Left cardiac atrium (tissue), 4 donors: ENCODE measurements at regions of chr10 and their contacts with region 1.

Region 1: GRCh38 chr10:69696073-69696731 is 66.2 kb downstream of the FAM241B start:
- DNase-seq: peak; percentile 44
- ATAC-seq: peak; percentile 74 to 79

Region 2: DNA sequence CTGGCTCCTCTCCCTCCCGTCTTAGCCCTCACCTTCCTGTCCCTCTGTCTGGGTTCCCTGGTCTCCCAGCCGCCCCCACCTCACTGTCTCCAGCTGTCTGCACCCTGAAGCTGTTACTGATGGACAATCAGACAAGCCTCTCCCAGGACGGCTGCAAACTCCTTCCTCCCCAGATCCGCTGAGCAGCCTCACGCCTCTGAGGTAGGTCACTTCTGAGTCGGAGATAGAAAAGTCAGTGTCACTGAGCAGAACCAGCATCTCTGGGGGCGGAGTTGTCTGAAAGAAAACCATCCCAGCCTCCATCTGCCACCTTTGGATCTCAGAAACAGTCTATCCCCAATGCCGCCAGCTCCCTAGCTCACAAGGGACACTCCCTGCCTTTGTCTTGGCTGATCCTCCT is 38.8 kb before region 1 on chr10:
- intact Hi-C with region 1: loop called in 1 of 2 experiments (anchors 5 kb)
- DNase-seq: no peak
- ATAC-seq: peak; percentile 35 to 39

Region 3: DNA sequence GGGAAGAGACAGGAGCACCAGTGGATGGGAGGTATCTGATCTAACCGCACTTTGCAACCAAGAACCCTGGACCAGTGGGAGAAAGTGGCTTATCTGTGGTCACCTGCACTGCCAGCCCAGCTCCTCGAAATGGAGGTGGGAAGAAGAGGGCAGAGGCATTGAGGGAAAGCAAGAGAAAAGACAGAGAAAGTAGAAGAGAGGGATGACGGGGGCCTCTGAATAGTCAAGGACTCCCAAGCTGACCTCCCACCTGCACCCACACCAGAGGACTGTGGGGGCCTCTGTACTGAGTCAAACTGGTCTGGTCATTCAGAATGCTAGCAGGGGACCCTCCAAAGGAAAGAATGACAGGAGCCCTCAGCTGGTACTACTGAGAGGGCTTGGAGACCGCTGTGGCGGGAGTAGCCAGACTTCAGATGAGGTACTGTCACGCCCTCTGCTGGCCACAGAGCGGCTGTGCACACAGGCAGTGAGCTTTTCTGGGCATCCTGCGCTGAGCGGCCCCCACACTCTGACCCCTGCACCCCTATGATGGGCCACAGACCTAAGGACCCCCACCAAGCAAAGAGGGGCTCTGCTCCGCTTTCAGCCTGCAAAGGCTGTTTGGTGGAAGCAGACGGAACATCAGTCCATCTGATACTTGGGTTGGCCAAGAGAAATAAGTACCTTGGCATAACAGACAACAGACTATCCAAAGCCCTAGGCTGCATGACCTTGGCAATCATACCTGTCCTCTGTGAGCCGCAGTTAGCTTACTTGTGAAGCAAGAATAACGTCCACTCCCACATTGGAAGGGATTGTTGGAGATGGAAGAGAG is 218.4 kb after region 1 on chr10:
- intact Hi-C with region 1: loop called in 1 of 2 experiments (anchors 10 kb)
- DNase-seq: peak; percentile 80
- ATAC-seq: peak; percentile 70 to 79